ENCODE measurements at regions of chr18 and their contacts with region 1.

Region 1: GRCh38 chr18:55234366-55235093 is 275.3 kb upstream of the CCDC68 start:
- DNase-seq: peak; percentile 32 to 70
- ATAC-seq: peak; percentile 93 to 95
- H3K4me3 ChIP-seq: no peak overlapping the region
- H3K27ac ChIP-seq: peak overlapping the region in 1 of 2 experiments; percentile 71; a peak in 3 of 6 replicates
- H3K4me1 ChIP-seq: no peaks in the 10 kb centered on the region
- CTCF ChIP-seq: peak; percentile 70
- EP300 ChIP-seq: no peak
- POLR2A ChIP-seq: no peak
- RAD21 ChIP-seq: peak; percentile 88 to 93

Region 2: GRCh38 chr18:55159027-55159426 is 75.5 kb before region 1 on chr18:
- CTCF ChIA-PET with region 1: no interaction called
- POLR2A ChIA-PET with region 1: no interaction called
- DNase-seq: no peak
- ATAC-seq: no peak
- H3K4me3 ChIP-seq: no peak overlapping the region
- H3K27ac ChIP-seq: no peak overlapping the region
- H3K4me1 ChIP-seq: no peaks in the 10 kb centered on the region
- CTCF ChIP-seq: no peak
- EP300 ChIP-seq: no peak
- POLR2A ChIP-seq: no peak
- RAD21 ChIP-seq: no peak

Region 3: DNA sequence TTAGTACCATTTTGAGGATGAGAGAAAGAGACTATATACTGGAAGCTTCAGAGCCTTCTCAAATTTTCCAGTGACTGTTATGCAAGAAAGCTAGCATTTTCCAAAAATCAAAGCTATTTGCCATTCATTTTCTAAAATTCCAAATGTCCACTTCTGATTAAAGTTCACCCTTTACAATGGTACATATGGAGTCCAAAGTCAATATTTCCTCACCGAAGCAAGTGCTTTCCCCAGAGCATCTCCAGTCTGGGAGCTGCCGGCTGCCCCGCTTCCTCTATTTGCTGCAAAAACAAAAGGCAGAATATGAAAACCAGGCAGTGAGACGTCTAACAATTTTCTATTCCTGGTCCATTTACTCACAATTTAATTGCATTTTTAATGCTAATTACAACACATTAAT is 26.7 kb after region 1 on chr18:
- CTCF ChIA-PET with region 1: interaction called, 17 read pairs
- POLR2A ChIA-PET with region 1: no interaction called
- DNase-seq: no peak
- ATAC-seq: no peak
- H3K4me3 ChIP-seq: no peak overlapping the region
- H3K27ac ChIP-seq: no peak overlapping the region
- H3K4me1 ChIP-seq: peaks cover 11% of the 10 kb centered on the region; the same call in 2 of the 3 replicates
- CTCF ChIP-seq: no peak
- EP300 ChIP-seq: no peak
- POLR2A ChIP-seq: no peak
- RAD21 ChIP-seq: no peak

Region 4: GRCh38 chr18:55489034-55489986 is 254.8 kb after region 1 on chr18:
- CTCF ChIA-PET with region 1: no interaction called
- POLR2A ChIA-PET with region 1: no interaction called
- DNase-seq: no peak
- ATAC-seq: no peak
- H3K4me3 ChIP-seq: no peak overlapping the region
- H3K27ac ChIP-seq: no peak overlapping the region
- H3K4me1 ChIP-seq: no peaks in the 10 kb centered on the region
- CTCF ChIP-seq: no peak
- EP300 ChIP-seq: no peak
- POLR2A ChIP-seq: no peak
- RAD21 ChIP-seq: no peak

Region 5: DNA sequence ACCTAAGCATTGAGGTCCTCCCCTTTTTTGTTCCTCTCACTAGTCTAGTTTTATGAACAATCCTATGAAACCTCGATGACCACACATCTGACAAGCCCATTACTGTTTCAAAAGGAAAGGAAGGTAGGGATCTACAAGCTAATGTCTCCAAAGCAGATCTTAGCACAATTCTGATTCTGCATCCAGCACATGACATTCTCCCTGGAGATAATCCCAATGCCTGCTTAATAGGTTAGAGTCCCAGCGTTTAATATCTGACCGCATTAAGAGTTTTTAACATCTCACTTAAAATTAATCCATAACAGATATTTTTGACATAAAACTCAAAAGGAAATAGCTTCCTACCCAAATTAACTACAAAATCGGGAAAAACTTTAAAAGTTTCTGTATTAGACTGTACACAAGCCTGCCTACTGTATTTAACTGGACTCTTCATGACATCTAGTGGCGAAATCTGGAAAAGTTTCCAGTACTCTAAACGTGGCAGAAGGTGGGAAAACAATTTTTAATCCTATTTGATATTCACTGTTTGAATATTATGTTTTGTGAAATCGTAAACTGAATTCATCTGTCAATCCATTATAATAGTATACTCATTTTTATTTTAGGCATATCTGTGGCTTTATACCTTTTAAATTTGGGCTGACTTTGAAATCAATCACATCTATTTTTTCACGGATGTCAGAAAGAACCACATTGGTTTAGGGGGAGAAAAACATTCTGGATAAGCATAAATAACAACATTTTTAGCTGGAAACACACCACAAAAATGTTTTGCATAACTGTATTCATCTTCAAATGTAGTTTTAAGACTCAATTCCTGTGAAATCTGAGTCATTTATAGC is 1341.5 kb after region 1 on chr18:
- CTCF ChIA-PET with region 1: interaction called, 14 read pairs
- POLR2A ChIA-PET with region 1: no interaction called
- DNase-seq: peak; percentile 25 to 28
- ATAC-seq: peak in 1 of 2 experiments; percentile 87; a peak in 3 of 6 replicates
- H3K4me3 ChIP-seq: no peak overlapping the region
- H3K27ac ChIP-seq: no peak overlapping the region
- H3K4me1 ChIP-seq: no peaks in the 10 kb centered on the region
- CTCF ChIP-seq: peak; percentile 74
- EP300 ChIP-seq: no peak
- POLR2A ChIP-seq: no peak
- RAD21 ChIP-seq: peak; percentile 81 to 86

Measured in A549 (cell line).